ENCODE measurements at regions of chr18 and their contacts with region 1.

Region 1: DNA sequence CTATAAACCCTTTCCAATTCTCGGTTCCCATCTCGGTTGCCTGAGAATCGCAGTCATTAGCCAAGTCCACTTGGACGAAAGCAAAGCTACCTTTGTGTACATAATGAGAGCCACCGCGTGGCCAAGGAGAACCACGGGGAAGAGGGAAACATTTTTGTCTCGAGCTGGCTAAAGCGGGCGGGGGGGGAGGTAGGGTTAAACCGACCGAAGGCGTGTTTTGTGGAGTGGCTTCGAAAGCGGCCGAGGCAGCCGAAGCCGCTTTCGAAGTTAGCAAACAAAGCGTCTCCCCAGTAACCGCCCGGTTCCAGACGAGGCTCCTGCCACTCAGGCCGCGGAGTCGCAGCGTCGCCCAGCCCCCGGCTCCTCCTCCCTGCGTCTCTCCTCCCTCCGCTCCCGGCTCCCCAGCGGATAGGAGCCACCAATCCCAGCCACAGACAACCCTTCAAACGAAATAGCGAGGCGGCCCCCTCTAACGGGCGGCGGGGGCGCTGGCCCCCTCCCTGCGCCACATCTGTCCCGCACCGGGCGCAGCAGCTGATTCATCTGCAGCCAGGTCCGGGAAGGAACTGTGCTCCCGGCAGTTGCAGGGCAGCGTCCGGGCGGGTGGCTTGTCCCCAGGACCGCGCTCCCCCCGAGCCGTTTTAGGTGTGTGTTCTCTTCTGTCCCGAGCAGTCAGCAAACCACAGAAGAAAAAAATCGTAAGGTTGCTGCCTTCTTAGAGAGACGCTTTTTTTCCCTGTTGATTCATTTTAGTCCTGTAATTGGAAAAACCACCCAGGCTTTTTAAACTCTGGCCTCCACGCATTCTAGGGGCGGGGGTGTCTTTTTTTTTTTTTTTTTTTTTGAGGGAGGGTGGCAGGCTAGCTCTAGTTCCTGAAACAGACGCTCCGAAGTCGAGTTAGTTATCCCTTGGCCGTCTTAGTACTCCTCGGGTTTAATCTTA is 1.8 kb upstream of the TGIF1 start:
- DNase-seq: peak; percentile 81 to 93
- ATAC-seq: peak; percentile 46 to 68 (median 57)
- H3K4me3 ChIP-seq: peak overlapping the region; percentile 91
- H3K4me3 Mint-ChIP-seq: peak overlapping the region; percentile 97
- H3K27ac ChIP-seq: peak overlapping the region; percentile 97
- H3K27ac Mint-ChIP-seq: peak overlapping the region; percentile 99 to 100
- H3K4me1 ChIP-seq: peaks cover 39% of the 10 kb centered on the region
- H3K4me1 Mint-ChIP-seq: peaks cover 29 to 44% of the 10 kb centered on the region in 2 donors
- H3K27me3 ChIP-seq: no peaks in the 10 kb centered on the region
- H3K27me3 Mint-ChIP-seq: no peaks in the 10 kb centered on the region
- CTCF ChIP-seq: no peak

Region 2: DNA sequence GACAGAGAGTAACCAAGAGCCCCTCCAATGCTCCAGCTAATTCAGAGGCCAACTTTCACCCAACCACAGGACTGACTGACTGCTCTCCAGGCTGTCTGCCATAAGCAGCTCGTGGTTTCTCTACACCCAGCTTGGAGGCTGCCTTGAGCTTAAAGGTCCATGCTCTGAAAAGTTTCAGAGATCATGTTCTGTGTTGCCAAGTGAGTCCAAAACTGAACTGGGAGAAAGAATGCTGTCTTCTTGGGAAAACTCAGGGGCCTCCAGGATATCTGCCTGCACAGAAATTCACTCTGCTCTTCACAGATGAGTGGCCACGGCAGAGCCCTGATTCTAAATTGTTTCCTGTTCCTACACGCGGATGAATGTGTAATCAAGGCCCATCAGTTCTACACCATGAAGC is 486.3 kb before region 1 on chr18:
- intact Hi-C with region 1: loop called (anchors 2 kb)
- DNase-seq: peak in 1 of 2 donors; percentile 54
- ATAC-seq: peak in 2 of 3 donors; percentile 14 to 18
- H3K4me3 ChIP-seq: no peak overlapping the region
- H3K4me3 Mint-ChIP-seq: peak overlapping the region; percentile 89
- H3K27ac ChIP-seq: peak overlapping the region; percentile 91
- H3K27ac Mint-ChIP-seq: peak overlapping the region; percentile 98 to 99
- H3K4me1 ChIP-seq: peaks cover 62% of the 10 kb centered on the region
- H3K4me1 Mint-ChIP-seq: peaks cover 69 to 78% of the 10 kb centered on the region in 2 donors
- H3K27me3 ChIP-seq: no peaks in the 10 kb centered on the region
- H3K27me3 Mint-ChIP-seq: no peaks in the 10 kb centered on the region
- CTCF ChIP-seq: no peak

Region 3: GRCh38 chr18:3261371-3262246 is 186.6 kb before region 1 on chr18 and contains the start of gene MYL12B:
- intact Hi-C with region 1: loop called (anchors 5 kb)
- DNase-seq: peak; percentile 82 to 91
- ATAC-seq: peak; percentile 72 to 88 (median 86)
- H3K4me3 ChIP-seq: peak within 1 kb of the TSS; percentile 96
- H3K4me3 Mint-ChIP-seq: peak within 1 kb of the TSS; percentile 94
- H3K27ac ChIP-seq: peak within 1 kb of the TSS; percentile 99
- H3K27ac Mint-ChIP-seq: peak within 1 kb of the TSS; percentile 88
- H3K4me1 ChIP-seq: peaks cover 36% of the 10 kb centered on the region
- H3K4me1 Mint-ChIP-seq: peaks cover 82 to 85% of the 10 kb centered on the region in 2 donors
- H3K27me3 ChIP-seq: no peaks in the 10 kb centered on the region
- H3K27me3 Mint-ChIP-seq: no peaks in the 10 kb centered on the region
- CTCF ChIP-seq: no peak
- total RNA-seq, gene MYL12B: 204 to 214 (median 210) TPM

Region 4: GRCh38 chr18:3297025-3297984 is 150.9 kb before region 1 on chr18:
- intact Hi-C with region 1: loop called (anchors 5 kb)
- DNase-seq: peak; percentile 87 to 95
- ATAC-seq: peak; percentile 98 to 99 (median 99)
- H3K4me3 ChIP-seq: peak overlapping the region; percentile 81
- H3K4me3 Mint-ChIP-seq: peak overlapping the region; percentile 93
- H3K27ac ChIP-seq: peak overlapping the region; percentile 52
- H3K27ac Mint-ChIP-seq: peak overlapping the region; percentile 37 to 88
- H3K4me1 ChIP-seq: peaks cover 14% of the 10 kb centered on the region
- H3K4me1 Mint-ChIP-seq: peaks cover 7 to 14% of the 10 kb centered on the region in 2 donors
- H3K27me3 ChIP-seq: peaks cover 17% of the 10 kb centered on the region
- H3K27me3 Mint-ChIP-seq: peaks cover 27 to 38% of the 10 kb centered on the region in 2 donors
- CTCF ChIP-seq: peak; percentile 75

Region 5: DNA sequence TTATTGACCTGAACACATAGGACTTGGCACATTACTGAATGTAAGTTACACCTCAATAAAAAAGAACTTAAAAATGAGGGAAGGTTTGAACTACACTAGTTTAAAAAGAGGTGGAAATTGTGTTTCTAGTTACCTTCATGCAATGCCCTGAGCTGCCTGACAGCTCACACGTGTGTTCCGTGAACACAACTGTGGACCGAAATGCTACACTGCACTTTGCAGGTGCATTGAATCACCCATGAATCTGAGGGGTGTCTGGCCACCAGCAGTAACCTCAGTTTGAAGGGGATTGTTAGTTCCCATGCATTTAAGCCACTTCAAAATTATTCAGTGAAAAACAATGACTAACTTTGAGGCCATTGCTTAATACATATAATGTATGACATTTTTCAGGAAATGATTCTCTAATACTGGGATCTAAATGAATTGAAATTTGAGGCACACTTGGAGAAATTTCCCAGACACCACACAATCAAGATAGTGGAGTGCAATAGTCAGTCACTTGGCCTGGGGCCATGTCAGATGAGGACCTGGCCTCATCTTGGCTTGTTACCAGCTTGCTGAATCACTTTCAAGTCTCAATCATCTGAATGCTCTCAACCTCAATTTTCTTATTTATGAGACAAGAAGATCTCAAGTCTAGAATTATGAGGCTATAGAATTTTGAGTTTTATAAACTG is 126.9 kb before region 1 on chr18:
- intact Hi-C with region 1: loop called (anchors 10 kb)
- DNase-seq: no peak
- ATAC-seq: no peak
- H3K4me3 ChIP-seq: no peak overlapping the region
- H3K4me3 Mint-ChIP-seq: no peak overlapping the region
- H3K27ac ChIP-seq: no peak overlapping the region
- H3K27ac Mint-ChIP-seq: no peak overlapping the region
- H3K4me1 ChIP-seq: no peaks in the 10 kb centered on the region
- H3K4me1 Mint-ChIP-seq: no peaks in the 10 kb centered on the region
- H3K27me3 ChIP-seq: no peaks in the 10 kb centered on the region
- H3K27me3 Mint-ChIP-seq: peaks cover 6 to 7% of the 10 kb centered on the region in 2 donors
- CTCF ChIP-seq: no peak

Region 6: GRCh38 chr18:3511922-3512372 is 63.8 kb after region 1 on chr18:
- intact Hi-C with region 1: loop called (anchors 2 kb)
- DNase-seq: peak in 1 of 2 donors; percentile 69
- ATAC-seq: peak; percentile 89 to 95 (median 93)
- H3K4me3 ChIP-seq: no peak overlapping the region
- H3K4me3 Mint-ChIP-seq: peak overlapping the region; percentile 43
- H3K27ac ChIP-seq: peak overlapping the region; percentile 20
- H3K27ac Mint-ChIP-seq: peak overlapping the region; percentile 56 to 89
- H3K4me1 ChIP-seq: peaks cover 14% of the 10 kb centered on the region
- H3K4me1 Mint-ChIP-seq: peaks cover 24 to 26% of the 10 kb centered on the region in 2 donors
- H3K27me3 ChIP-seq: no peaks in the 10 kb centered on the region
- H3K27me3 Mint-ChIP-seq: peaks cover 5 to 10% of the 10 kb centered on the region in 2 donors
- CTCF ChIP-seq: no peak

Region 7: GRCh38 chr18:3593904-3594661 is 145.9 kb after region 1 on chr18:
- intact Hi-C with region 1: loop called (anchors 1 kb)
- DNase-seq: peak; percentile 86 to 96
- ATAC-seq: peak; percentile 67 to 87 (median 85)
- H3K4me3 ChIP-seq: peak overlapping the region; percentile 53
- H3K4me3 Mint-ChIP-seq: peak overlapping the region; percentile 93
- H3K27ac ChIP-seq: peak overlapping the region; percentile 97
- H3K27ac Mint-ChIP-seq: peak overlapping the region; percentile 99
- H3K4me1 ChIP-seq: peaks cover 47% of the 10 kb centered on the region
- H3K4me1 Mint-ChIP-seq: peaks cover 47% of the 10 kb centered on the region in 2 donors
- H3K27me3 ChIP-seq: no peaks in the 10 kb centered on the region
- H3K27me3 Mint-ChIP-seq: no peaks in the 10 kb centered on the region
- CTCF ChIP-seq: peak; percentile 75

Measured in natural killer cell (primary cell).